Heart right ventricle (tissue), 16 donors: ENCODE measurements at regions of chr17 and their contacts with region 1.

Region 1: GRCh38 chr17:68260051-68260762 is 12.4 kb downstream of the AMZ2 start:
- DNase-seq: no peak
- ATAC-seq: no peak
- H3K4me3 ChIP-seq: no peak overlapping the region
- H3K27ac ChIP-seq: peak overlapping the region in 1 of 10 donors; percentile 71
- H3K4me1 ChIP-seq: peaks cover 0 to 62% (median 14%) of the 10 kb centered on the region in 9 donors
- H3K27me3 ChIP-seq: no peaks in the 10 kb centered on the region
- CTCF ChIP-seq: no peak

Region 2: GRCh38 chr17:68398691-68399637 is 138.8 kb after region 1 on chr17:
- intact Hi-C with region 1: loop called in 8 of 10 experiments (anchors 2 to 10 kb)
- DNase-seq: peak; percentile 50 to 59
- ATAC-seq: peak; percentile 52 to 86 (median 69)
- H3K4me3 ChIP-seq: no peak overlapping the region
- H3K27ac ChIP-seq: peak overlapping the region in 6 of 10 donors; percentile 3 to 50 (median 41)
- H3K4me1 ChIP-seq: peaks cover 0 to 35% (median 18%) of the 10 kb centered on the region in 9 donors
- H3K27me3 ChIP-seq: no peaks in the 10 kb centered on the region
- CTCF ChIP-seq: peak; percentile 52 to 87 (median 75)

Region 3: DNA sequence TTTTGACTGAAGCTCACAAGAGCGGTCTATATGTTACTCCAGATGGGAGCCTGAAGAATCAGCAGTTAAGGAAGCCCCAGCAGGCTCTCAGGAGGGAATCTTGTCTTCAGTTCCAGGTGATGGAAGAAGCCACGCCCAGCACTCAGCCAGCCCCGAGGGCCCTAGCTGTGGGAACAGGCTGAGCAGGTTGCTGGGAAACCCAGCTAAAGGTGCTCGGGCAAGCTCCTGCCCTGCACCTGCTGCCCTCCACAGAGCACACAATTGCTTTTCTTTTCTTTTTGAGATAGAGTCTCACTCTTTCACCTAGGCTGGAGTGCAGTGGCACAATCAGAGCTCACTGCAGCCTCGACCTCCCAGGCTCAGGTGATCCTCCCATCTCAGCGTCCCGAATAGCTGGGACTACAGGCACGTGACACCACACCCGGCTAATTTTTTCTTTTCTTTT is 164.8 kb after region 1 on chr17:
- intact Hi-C with region 1: loop called in 5 of 10 experiments (anchors 10 kb)
- DNase-seq: no peak
- ATAC-seq: no peak
- H3K4me3 ChIP-seq: no peak overlapping the region
- H3K27ac ChIP-seq: no peak overlapping the region
- H3K4me1 ChIP-seq: no peaks in the 10 kb centered on the region
- H3K27me3 ChIP-seq: no peaks in the 10 kb centered on the region
- CTCF ChIP-seq: no peak

Region 4: DNA sequence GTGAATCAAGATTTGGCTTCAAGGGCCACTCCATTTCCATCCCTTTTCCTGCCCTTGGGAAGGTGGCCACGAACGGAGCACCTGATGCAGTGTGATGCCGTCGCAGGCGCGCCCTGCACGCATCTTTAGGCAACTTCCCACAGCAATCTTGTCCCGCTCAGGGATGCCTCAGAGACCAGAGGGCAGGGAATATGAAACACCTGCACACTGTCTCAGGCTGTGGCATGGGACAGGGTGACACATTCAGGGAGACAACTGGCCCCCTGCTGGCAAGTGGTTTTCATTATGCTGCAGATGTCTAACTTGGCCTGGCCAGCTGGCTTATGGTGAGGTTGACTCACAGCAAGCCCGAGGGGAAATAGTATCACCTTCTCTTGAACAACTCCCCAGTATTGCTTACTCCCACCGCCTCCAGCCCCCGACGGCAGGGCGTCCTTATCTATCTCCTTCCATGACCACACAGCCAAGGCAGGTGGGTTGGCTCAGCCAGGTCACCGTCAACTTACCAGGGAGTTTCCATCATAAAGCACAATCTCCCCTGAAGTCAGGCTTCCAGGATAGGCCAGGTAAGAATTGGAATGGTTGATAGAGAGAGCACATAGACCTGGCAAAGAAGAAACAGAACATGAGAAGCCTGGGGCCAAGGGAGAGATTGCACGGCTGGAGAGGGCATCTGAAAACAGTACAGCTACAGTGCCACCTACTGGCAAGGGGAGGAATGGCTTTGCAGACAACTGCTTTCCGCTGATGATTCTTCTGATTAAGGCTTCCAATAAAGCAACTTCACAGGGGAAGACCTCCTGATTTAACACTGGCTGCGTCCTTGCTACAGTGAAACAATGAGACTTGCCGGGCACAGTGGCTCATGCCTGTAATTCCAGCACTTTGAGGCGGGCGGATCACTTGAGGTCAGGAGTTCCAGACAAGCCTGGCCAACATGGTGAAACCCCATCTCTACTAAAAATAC is 176.0 kb after region 1 on chr17:
- intact Hi-C with region 1: loop called in 9 of 10 experiments (anchors 2 to 10 kb)
- DNase-seq: peak; percentile 58 to 83
- ATAC-seq: peak; percentile 43 to 77 (median 66)
- H3K4me3 ChIP-seq: no peak overlapping the region
- H3K27ac ChIP-seq: peak overlapping the region in 7 of 10 donors; percentile 35 to 90 (median 72)
- H3K4me1 ChIP-seq: peaks cover 3 to 80% (median 59%) of the 10 kb centered on the region in 9 donors
- H3K27me3 ChIP-seq: no peaks in the 10 kb centered on the region
- CTCF ChIP-seq: peak; percentile 84 to 95 (median 88)

Region 5: GRCh38 chr17:68468334-68468733 is 208.1 kb after region 1 on chr17:
- intact Hi-C with region 1: loop called in 6 of 10 experiments (anchors 2 to 10 kb)
- DNase-seq: peak in 1 of 2 donors; percentile 51
- ATAC-seq: peak; percentile 68 to 92 (median 86)
- H3K4me3 ChIP-seq: no peak overlapping the region
- H3K27ac ChIP-seq: peak overlapping the region; percentile 33 to 94 (median 84)
- H3K4me1 ChIP-seq: peaks cover 0 to 34% (median 8%) of the 10 kb centered on the region in 9 donors
- H3K27me3 ChIP-seq: no peaks in the 10 kb centered on the region
- CTCF ChIP-seq: no peak

Region 6: DNA sequence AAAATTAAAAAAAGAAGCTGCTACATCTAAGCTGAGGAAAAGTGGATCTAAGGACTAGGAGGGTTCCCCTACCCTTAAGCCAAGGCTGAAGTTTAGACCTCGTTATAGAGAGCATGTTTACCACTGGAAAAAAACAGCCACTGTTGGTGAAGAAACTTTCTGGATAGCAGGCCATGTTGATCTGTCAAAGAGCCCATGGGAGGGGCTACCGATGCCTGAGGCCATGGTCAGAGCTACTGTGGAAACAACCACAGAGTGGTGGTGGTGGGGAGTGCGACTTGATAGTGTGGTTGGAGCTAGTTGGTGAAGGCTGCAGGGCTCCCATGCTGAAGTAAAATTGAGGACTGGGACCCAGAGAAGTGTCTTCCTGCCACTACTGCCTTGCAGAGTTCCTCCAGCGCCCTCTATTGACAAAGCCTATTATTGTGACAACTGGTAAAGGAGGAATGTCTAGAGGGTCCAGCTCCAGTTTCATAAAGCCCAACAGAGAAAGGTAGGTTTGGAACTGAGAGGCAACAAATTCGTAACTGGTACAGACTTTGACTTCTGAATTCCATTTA is 353.6 kb after region 1 on chr17:
- intact Hi-C with region 1: loop called in 1 of 10 experiments (anchors 10 kb)
- DNase-seq: peak in 1 of 2 donors; percentile 71
- ATAC-seq: peak in 5 of 8 donors; percentile 52 to 77 (median 70)
- H3K4me3 ChIP-seq: no peak overlapping the region
- H3K27ac ChIP-seq: no peak overlapping the region
- H3K4me1 ChIP-seq: no peaks in the 10 kb centered on the region
- H3K27me3 ChIP-seq: no peaks in the 10 kb centered on the region
- CTCF ChIP-seq: peak in 8 of 9 donors; percentile 46 to 76 (median 70)

Region 7: DNA sequence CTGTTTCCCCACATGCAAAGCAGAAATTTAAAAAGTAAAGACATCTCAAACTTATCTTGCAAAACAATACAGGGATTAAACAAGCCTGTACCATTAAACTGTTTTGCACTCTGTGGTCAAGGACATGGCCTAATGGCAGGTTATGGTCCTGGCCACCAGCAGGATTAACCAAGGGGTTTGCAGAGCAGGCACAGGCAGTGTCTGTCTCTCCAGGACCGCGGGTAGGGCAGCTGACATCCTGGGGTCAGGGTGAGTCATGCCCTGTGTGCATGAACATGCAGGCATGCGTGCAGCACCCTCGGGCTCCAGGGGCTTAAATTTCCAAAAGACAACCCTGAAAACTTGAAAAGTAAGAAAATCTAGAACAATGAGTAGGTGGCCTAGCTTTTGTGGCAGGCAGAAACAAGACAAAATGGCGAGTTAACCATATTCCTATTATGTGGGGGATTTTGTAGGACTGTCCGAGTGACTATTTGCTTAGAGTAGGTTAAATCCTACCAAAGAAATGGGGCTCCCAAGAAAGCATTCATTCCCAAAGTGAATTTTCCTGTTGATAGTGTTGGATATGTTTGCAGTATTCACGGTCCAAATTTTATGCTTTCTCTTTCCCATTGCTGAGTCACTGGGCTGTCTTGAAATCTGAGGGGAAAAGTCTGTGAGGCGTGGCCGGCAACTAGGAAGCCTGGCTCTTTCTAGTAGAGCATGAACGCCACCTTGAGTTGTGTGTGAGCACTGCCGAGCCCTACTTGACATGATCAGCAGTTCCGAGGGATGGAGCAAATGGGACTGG is 499.3 kb after region 1 on chr17:
- intact Hi-C with region 1: loop called in 1 of 10 experiments (anchors 5 kb)
- DNase-seq: peak; percentile 81 to 88
- ATAC-seq: peak; percentile 96 to 99 (median 98)
- H3K4me3 ChIP-seq: peak overlapping the region in 7 of 10 donors; percentile 14 to 49 (median 40)
- H3K27ac ChIP-seq: peak overlapping the region; percentile 42 to 90 (median 79)
- H3K4me1 ChIP-seq: peaks cover 0 to 14% (median 8%) of the 10 kb centered on the region in 9 donors
- H3K27me3 ChIP-seq: no peaks in the 10 kb centered on the region
- CTCF ChIP-seq: peak; percentile 69 to 95 (median 86)